ENCODE measurements at regions of chr17 and their contacts with region 1.

Region 1: DNA sequence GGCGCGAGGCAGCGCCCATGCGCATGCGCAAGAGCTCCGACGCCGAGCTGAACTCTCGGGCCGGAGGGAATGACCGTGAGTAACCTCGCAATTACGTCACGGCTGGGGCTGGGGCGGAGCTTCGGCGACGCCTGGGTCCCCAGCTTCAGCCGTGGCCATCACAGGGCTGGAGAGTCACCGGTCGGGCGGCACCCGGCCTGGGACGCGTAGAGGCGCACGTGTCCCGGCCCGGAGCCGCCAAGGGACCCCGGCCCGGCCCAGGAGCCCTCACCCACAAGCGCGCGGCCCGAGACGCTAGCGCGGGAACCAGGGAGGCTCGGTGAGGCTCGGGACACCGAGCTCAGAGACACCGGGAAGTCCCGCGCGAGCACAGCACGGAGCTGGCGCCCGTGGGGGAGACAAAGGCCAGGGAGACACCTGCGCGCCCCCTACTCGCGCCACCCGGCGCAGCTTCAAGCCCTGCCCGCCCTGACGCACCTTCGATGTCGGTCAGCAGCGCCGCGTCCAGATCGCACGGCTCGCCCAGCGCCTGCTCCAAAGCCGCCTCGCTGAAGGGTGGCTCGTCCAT is 452 bp downstream of the SREBF1 start:
- DNase-seq: peak; percentile 93
- ATAC-seq: peak; percentile 59
- H3K4me3 Mint-ChIP-seq: peak overlapping the region; percentile 86
- H3K27ac Mint-ChIP-seq: peak overlapping the region; percentile 66
- H3K4me1 Mint-ChIP-seq: peaks cover 70% of the 10 kb centered on the region
- H3K27me3 Mint-ChIP-seq: no peaks in the 10 kb centered on the region
- CTCF ChIP-seq: no peak

Region 2: DNA sequence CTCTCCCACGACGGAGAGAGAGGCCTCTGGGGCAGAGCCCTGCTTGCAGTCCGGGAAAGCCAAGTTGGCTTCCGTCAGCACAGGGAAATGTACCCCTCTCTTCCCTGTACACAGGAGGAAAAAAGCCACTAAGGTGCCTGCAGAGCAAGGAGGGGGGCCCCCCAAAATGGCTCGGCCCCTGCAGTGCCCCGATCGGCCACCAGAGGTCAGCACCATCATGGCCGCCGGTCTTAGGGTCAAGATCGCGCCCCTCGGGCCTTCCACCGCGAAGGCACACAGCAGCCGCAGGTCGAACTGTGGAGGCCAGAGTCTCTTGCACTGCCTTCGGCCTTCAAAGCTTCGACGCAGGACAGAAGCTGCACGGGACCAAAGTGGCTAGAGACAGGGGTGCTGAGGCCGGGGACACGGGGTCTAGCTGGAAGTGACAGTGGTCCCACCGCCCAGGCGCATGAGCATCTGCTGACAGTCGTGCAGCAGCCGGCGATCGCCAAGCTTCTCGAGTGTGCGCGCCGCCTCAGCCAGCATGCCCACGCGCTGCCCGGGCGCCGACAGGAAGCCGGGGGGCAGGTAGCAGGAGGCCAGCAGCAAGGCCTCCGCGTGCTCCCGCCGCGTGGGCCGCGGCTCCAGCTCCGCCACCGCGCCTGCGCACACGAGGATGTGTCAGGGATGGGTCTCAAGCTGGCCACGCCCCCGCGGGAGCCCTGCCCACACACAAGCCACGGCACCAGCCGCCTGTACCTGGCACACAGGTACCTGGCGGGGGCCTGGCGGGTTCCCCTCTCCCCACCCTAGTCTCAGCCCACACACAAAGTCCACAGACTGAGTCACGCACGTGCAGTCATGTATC is 23.9 kb before region 1 on chr17:
- CTCF ChIA-PET with region 1: interaction called, 11 read pairs
- POLR2A ChIA-PET with region 1: interaction called, 9 read pairs
- intact Hi-C with region 1: loop called (anchors 1 kb)
- DNase-seq: peak; percentile 81
- ATAC-seq: peak; percentile 82
- H3K4me3 Mint-ChIP-seq: no peak overlapping the region
- H3K27ac Mint-ChIP-seq: no peak overlapping the region
- H3K4me1 Mint-ChIP-seq: peaks cover 11% of the 10 kb centered on the region
- H3K27me3 Mint-ChIP-seq: no peaks in the 10 kb centered on the region
- CTCF ChIP-seq: peak; percentile 70

Region 3: DNA sequence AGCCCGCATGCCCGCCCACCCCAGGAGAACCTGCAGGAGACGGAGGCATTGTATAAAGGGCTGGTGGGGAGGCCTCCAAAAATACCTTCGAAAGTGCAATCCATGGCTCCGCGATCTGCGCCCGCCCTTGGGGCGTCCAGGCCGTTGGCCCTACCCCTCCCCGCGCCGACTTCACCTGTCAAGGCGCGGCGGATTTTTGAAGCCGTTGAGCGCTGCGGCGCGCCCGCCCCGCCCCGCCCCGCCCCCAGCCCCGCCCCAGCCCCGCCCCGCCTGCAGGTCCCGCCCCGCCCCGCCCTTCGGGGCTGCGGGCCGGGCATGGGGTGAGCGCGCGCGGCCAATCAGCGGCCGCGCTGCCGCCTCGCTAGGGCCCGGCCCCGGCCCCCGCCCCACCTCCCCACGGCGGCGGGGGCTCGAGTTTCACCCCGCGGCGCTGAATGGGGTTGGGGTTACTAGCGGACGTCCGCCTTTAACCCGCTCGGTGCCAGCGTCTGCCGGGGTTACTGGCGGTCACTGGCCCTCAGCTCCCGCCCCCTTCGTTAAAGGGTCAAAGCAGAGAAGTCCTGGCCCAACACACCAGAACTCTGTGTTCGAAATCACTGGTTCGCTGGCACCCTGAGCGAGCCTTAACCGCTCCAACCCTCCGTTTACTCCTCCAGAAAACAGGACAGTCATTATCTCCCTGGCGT is 12.8 kb before region 1 on chr17:
- CTCF ChIA-PET with region 1: no interaction called
- POLR2A ChIA-PET with region 1: interaction called, 48 read pairs
- intact Hi-C with region 1: loop called (anchors 1 kb)
- DNase-seq: peak; percentile 71
- ATAC-seq: peak; percentile 88
- H3K4me3 Mint-ChIP-seq: peak overlapping the region; percentile 78
- H3K27ac Mint-ChIP-seq: peak overlapping the region; percentile 30
- H3K4me1 Mint-ChIP-seq: peaks cover 62% of the 10 kb centered on the region
- H3K27me3 Mint-ChIP-seq: no peaks in the 10 kb centered on the region
- CTCF ChIP-seq: no peak

Region 4: GRCh38 chr17:17849845-17850373 is 13.6 kb after region 1 on chr17:
- CTCF ChIA-PET with region 1: interaction called, 4 read pairs
- POLR2A ChIA-PET with region 1: interaction called, 9 read pairs
- intact Hi-C with region 1: loop called (anchors 1 kb)
- DNase-seq: no peak
- ATAC-seq: peak; percentile 88
- H3K4me3 Mint-ChIP-seq: no peak overlapping the region
- H3K27ac Mint-ChIP-seq: peak overlapping the region; percentile 24
- H3K4me1 Mint-ChIP-seq: peaks cover 35% of the 10 kb centered on the region
- H3K27me3 Mint-ChIP-seq: no peaks in the 10 kb centered on the region
- CTCF ChIP-seq: no peak

Region 5: GRCh38 chr17:17859909-17860765 is 23.8 kb after region 1 on chr17:
- CTCF ChIA-PET with region 1: interaction called, 5 read pairs
- POLR2A ChIA-PET with region 1: interaction called, 4 read pairs
- intact Hi-C with region 1: loop called (anchors 1 kb)
- DNase-seq: peak; percentile 65
- ATAC-seq: peak; percentile 99
- H3K4me3 Mint-ChIP-seq: no peak overlapping the region
- H3K27ac Mint-ChIP-seq: no peak overlapping the region
- H3K4me1 Mint-ChIP-seq: no peaks in the 10 kb centered on the region
- H3K27me3 Mint-ChIP-seq: no peaks in the 10 kb centered on the region
- CTCF ChIP-seq: peak; percentile 84

Measured in activated B cell treated with CpG ODN at 0.5 μM for 24 hours (primary cell).